Activated CD4-positive, alpha-beta T cell treated with anti-CD3 and anti-CD28 coated beads for 36 hours (primary cell): ENCODE measurements at regions of chrX and their contacts with region 1.

Region 1: DNA sequence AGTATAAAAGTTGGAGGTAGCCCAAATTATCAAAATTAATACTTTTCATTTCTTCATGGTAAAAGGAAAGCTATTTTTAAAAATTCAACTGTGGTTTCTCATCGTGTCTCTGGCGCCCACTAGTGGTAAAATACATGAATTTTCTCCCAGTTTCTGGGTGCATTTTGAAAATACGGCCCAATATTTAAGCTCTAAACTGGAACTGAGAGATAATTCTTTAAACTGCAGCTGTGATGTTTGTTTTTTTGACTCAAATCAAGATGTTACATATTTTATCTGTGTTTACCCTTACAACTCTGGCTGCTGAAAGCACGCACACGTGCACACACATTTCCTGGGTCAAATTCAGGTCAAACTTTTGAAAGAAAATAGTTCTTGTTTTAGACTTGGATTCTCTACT is 123.9 kb upstream of the ACSL4 start:
- DNase-seq: peak; percentile 18
- ATAC-seq: no peak
- H3K4me3 Mint-ChIP-seq: no peak overlapping the region
- H3K27ac Mint-ChIP-seq: no peak overlapping the region
- H3K4me1 Mint-ChIP-seq: no peaks in the 10 kb centered on the region
- H3K27me3 Mint-ChIP-seq: no peaks in the 10 kb centered on the region

Region 2: DNA sequence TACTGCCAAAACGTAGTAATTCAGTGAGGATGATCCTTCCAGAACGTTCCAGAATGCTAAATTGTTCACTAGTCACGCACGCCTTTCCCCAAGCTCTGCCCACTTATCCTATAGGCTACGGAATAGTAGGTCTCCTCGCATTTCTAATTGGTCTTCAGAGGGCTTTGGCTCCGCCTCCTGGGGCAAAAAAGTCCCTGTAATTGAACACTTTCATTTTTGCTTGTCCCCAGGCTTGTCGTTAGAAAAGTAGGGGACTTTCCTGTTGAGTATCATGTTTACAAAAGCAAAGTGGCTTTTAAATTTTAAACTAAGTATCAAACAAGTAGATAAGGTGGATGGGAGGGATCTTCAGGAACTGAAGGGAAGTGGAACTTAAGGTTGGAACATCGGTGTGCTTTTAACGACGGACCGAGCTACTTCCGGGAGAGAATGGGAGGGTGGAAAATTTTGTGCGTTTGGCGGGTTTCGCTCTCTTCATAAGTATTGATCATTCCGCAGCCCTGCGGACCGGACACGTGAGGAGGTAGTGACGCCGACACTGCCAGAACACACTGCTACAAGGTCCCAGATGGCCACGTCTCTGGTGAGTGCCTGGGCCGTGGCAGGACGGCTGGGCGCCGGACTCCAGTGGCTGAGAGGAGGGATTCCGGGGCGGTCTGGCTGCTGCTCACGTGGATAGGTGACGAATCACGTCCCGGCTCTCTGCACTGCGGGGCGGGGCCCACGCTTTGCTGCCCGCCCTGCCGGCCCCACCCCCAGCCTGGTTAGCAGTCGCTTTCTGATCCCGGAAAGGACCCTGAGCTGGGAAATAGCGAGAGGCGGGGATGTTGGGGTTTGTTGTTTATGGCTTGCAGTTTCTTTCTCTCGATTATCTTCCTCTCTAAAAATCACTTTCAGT is 320.3 kb before region 1 on chrX and contains the start of gene NXT2:
- CTCF ChIA-PET with region 1: no interaction called
- POLR2A ChIA-PET with region 1: no interaction called
- intact Hi-C with region 1: loop called in 1 of 2 experiments (anchors 5 kb)
- DNase-seq: peak; percentile 91
- ATAC-seq: peak; percentile 98
- H3K4me3 Mint-ChIP-seq: peak within 1 kb of the TSS; percentile 89
- H3K27ac Mint-ChIP-seq: peak within 1 kb of the TSS; percentile 99
- H3K4me1 Mint-ChIP-seq: peaks cover 14% of the 10 kb centered on the region
- H3K27me3 Mint-ChIP-seq: peaks cover 5% of the 10 kb centered on the region
- total RNA-seq, gene NXT2: 10.9 to 11.6 TPM

Region 3: DNA sequence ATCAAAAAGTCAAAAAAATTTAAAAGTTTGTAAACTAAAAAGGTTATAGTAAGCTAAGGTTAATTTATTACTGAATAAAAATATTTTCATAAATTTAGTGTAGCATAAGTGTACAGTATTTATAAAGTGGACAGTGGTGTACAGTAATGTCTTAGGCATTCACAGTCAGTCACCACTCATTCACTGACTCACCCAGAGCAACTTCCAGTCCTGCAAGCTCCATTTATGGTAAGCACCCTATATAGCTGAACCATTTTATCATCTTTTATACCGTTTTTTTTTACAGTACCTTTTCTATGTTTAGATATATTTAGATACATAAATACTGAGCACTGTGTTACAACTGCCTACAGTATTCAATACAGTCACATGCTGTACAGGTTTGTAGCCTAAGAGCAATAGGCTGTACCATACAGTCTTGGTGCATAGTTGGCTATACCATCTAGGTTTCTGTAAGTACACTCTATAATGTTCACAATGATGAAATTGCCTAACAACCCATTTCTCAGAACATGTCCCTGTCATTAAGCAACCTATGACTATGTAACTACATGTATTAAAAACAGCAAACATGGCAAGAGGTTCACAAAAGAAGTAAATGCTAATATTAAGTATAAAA is 142.5 kb before region 1 on chrX:
- CTCF ChIA-PET with region 1: interaction called, 64 read pairs
- POLR2A ChIA-PET with region 1: no interaction called
- intact Hi-C with region 1: loop called (anchors 1 kb)
- DNase-seq: no peak
- ATAC-seq: peak; percentile 54
- H3K4me3 Mint-ChIP-seq: no peak overlapping the region
- H3K27ac Mint-ChIP-seq: no peak overlapping the region
- H3K4me1 Mint-ChIP-seq: peaks cover 46% of the 10 kb centered on the region
- H3K27me3 Mint-ChIP-seq: no peaks in the 10 kb centered on the region

Region 4: DNA sequence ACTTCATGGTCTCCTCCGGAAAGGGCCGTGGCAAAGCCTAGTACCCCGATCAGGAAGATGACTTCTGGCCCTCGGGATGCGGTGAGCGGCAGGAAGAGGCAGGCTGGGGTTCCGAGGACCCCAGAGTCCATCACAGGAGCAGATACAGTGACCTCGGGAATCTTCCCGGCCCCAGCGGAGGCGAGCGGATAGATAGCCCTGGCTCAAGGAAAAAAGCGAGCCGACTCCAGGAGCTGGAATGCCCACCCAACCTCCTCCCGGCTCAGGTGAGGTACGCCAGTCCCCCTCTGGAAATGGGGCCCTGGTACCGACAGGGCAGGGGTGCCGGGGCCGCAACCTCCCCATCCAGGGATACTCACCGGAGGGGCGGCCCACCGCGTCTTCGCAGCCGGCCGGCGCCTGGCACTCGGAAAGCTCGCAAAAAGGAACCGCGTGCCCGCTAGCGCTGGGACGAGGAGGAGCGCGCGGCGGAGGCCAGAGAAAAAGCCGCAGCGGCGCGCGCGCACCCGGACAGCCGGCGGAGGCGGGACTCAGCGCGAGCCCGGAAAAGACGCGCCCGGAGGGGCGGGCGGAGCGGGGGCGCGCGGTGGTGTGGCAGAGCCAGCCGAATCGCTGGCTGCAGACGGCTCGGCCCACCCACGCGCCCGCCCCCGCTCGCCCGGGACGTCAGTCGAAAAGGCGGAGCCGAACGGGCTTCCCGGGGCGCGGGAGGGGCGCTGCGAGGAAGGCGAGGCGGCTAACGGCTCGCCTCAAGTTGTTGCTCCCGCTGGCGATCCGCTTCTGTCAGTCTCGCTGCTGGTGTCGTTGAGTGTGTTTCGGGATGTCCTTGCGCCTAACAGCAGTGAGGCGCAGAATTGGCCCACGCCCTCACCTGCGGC is 124.0 kb before region 1 on chrX and contains the start of gene ACSL4:
- CTCF ChIA-PET with region 1: interaction called, 6 read pairs
- POLR2A ChIA-PET with region 1: no interaction called
- intact Hi-C with region 1: loop called (anchors 5 kb)
- DNase-seq: peak; percentile 91
- ATAC-seq: peak; percentile 77
- H3K4me3 Mint-ChIP-seq: peak within 1 kb of the TSS; percentile 82
- H3K27ac Mint-ChIP-seq: peak within 1 kb of the TSS; percentile 99
- H3K4me1 Mint-ChIP-seq: peaks cover 22% of the 10 kb centered on the region
- H3K27me3 Mint-ChIP-seq: no peaks in the 10 kb centered on the region
- total RNA-seq, gene ACSL4: 44.0 to 64.5 TPM

Region 5: DNA sequence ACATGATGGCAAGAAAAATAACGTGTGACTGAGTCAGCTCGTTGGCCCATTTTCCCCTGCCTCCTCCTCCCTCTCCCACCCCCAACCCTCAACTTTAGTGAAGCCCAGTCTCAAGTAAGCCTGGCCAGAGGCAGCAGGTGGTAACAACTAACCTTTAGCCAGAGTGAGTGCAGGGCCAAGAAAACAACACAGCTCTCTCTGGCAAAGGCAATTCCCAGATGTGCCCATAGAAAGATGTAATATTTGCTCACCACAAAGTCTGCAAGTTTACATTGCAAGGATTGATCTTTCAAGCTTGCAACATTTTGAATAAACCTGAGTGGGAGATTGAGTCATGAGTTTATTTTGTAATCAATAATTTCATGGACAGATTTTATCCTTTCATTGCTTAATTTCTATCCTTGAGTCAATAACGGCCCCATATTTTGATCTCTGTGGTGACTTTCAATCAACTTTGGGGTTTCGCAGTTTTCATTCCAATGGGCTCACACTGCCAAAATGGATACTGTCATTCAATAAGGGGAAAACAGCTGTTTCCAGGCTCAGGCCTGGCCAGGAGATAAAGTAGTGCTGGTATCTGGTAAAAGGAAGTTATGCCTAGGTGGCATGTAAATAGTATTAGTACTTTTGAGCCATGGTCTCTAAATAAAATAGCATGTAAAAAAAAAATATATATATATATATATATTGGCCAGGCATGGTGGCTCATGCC is 15.2 kb after region 1 on chrX:
- CTCF ChIA-PET with region 1: interaction called, 10 read pairs
- POLR2A ChIA-PET with region 1: no interaction called
- intact Hi-C with region 1: no loop called
- DNase-seq: no peak
- ATAC-seq: no peak
- H3K4me3 Mint-ChIP-seq: no peak overlapping the region
- H3K27ac Mint-ChIP-seq: no peak overlapping the region
- H3K4me1 Mint-ChIP-seq: no peaks in the 10 kb centered on the region
- H3K27me3 Mint-ChIP-seq: no peaks in the 10 kb centered on the region